ENCODE measurements at regions of chr19 and their contacts with region 1.

Region 1: DNA sequence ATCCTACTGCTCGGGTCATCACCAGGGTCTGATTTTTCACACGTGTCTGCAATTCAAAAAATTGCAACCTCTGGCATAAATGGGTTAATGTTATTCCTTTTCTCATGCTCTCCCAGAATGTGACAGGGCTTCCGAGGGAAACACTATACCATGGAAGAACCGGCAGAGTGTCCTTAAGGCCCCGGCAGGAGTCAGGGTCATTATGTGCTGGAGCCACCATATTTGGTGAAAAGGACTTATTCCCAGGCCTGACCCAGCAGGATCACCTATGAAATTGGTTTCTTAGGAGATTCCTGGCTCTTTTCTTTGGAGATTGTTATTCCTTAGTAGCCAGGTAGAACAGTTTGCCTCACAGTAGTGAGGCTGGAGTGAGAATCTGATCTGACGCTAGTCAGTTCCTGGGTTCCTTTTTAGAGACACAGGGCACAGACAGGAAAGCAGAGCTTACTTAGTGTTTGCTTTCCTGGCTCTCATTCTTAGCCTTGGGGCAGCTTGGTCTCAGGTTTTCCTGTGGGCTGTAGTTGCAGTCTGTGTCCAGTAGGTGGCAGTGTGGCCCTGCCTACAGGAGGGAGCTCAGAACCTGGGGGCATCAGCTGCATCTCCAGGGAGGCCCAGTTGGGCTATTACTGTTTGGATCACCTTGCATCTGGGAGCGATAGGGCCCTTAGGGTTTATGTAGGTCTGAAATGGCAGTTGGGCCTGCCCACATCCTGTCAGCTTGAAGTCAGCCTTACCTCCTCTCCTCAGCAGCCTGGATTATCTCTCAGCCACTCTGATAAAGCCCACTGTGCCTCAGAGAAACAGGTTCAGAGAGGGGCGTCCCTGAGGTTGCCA is 12.4 kb downstream of the SNRNP70 start:
- DNase-seq: peak; percentile 71
- ATAC-seq: peak; percentile 62

Region 2: GRCh38 chr19:48899781-48900476 is 197.7 kb before region 1 on chr19 and contains the start of gene NUCB1:
- intact Hi-C with region 1: no loop called
- DNase-seq: peak; percentile 99
- ATAC-seq: peak; percentile 97
- total RNA-seq, gene NUCB1: 265 TPM

Region 3: DNA sequence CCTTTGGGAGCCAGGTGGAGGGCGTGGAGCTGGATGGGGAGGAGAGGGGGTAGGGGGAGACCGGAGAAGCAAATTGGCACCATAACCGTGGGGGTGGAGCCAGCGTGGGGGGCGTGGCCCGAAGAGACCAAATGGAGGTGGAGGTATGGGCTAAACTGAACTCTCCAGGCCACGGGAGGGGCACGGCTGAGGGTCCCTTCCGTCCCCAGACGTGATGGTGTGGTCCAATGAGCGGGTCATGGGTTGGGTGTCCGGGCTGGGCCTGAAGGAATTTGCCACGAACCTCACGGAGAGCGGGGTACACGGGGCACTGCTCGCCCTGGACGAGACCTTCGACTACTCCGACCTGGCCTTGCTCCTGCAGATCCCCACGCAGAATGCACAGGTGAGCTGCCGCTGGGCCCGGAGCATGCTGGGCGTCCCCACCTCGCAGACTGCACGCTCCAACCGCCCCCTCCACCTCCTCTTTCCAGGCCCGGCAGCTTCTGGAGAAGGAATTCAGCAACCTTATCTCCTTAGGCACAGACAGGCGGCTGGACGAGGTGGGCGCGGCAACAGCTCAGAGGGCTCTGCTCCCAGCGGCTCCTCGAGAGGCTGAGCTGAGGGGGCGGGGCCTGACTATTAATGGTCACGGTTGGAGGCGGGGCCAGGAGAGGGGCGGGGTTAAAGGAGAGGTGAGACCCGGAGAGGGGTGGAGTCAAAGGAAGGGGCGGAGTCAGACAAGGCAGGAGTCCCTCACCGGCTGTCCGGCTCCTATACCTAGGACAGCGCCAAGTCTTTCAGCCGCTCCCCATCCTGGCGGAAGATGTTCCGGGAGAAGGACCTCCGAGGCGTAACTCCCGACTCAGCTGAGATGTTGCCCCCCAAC is 51.3 kb after region 1 on chr19:
- intact Hi-C with region 1: loop called (anchors 10 kb)
- DNase-seq: peak; percentile 98
- ATAC-seq: peak; percentile 81